Activated CD4-positive, alpha-beta memory T cell treated with anti-CD3 and anti-CD28 coated beads for 36 hours (primary cell): ENCODE measurements at regions of chr3 and their contacts with region 1.

Region 1: GRCh38 chr3:4834403-4834866 is 144.8 kb upstream of the BHLHE40 start:
- DNase-seq: peak; percentile 90
- H3K4me3 Mint-ChIP-seq: peak overlapping the region; percentile 49
- H3K27ac Mint-ChIP-seq: peak overlapping the region; percentile 84
- H3K4me1 Mint-ChIP-seq: peaks cover 86% of the 10 kb centered on the region
- H3K27me3 Mint-ChIP-seq: no peaks in the 10 kb centered on the region

Region 2: DNA sequence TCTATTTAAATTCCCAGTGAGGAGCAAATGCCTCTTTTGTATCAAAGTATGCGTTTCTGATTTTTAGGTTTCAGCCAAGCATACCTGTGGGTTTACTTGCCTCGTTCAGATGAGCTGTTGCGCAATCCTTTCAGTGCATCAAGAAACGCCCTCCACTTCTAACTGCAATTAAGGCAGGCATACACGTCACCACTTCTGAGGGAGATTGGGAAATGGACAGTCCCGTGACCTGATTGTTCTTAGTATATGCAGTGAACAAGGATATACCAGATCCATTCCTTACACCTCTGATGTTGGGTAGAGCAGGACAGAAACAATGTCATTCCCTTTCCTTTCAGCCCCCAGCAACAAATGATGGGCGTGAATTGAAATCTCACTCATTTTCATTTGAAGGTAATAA is 122.3 kb before region 1 on chr3:
- CTCF ChIA-PET with region 1: interaction called, 11 read pairs
- POLR2A ChIA-PET with region 1: no interaction called
- intact Hi-C with region 1: no loop called
- DNase-seq: no peak
- H3K4me3 Mint-ChIP-seq: no peak overlapping the region
- H3K27ac Mint-ChIP-seq: no peak overlapping the region
- H3K4me1 Mint-ChIP-seq: peaks cover 1% of the 10 kb centered on the region
- H3K27me3 Mint-ChIP-seq: no peaks in the 10 kb centered on the region

Region 3: DNA sequence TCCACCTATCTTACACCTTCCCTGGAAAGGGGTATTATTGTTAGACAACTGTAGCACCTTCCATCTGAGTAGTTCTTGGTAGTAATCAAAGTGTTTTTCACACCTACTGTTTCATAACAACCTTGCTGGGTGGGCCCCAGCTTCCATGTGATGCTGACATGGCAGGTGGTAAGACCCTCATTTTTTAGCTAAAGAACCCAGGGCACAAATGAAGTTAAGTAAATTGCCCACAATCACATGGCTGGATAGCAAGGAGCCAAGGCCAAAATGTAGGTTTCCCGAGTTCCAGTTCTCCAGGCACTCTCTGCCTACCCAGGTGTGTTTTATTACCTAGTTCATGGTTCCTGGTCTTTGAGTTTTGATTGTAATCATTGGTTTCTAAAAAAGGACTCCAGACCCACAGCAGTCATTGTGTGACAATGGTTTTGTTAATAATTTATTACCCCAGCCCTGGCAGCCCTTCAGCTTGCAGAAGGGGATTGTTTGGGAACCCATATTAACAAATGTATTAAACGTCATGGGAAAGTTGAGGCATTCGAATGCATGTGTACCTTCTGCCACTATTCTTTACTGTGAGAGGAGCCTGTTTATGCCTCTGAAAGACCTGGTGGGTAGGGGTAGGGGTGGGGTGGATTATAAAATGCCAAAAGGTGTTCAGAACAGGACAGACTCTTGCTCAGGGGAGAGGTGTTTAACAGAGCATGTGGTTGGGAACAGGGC is 77.4 kb before region 1 on chr3:
- CTCF ChIA-PET with region 1: no interaction called
- POLR2A ChIA-PET with region 1: no interaction called
- intact Hi-C with region 1: no loop called
- DNase-seq: no peak
- H3K4me3 Mint-ChIP-seq: no peak overlapping the region
- H3K27ac Mint-ChIP-seq: no peak overlapping the region
- H3K4me1 Mint-ChIP-seq: peaks cover 15% of the 10 kb centered on the region
- H3K27me3 Mint-ChIP-seq: no peaks in the 10 kb centered on the region

Region 4: GRCh38 chr3:4776980-4777581 is 57.4 kb before region 1 on chr3:
- CTCF ChIA-PET with region 1: no interaction called
- POLR2A ChIA-PET with region 1: interaction called, 3 read pairs
- intact Hi-C with region 1: loop called (anchors 2 kb)
- DNase-seq: peak; percentile 45
- H3K4me3 Mint-ChIP-seq: peak overlapping the region; percentile 47
- H3K27ac Mint-ChIP-seq: peak overlapping the region; percentile 91
- H3K4me1 Mint-ChIP-seq: peaks cover 37% of the 10 kb centered on the region
- H3K27me3 Mint-ChIP-seq: no peaks in the 10 kb centered on the region

Region 5: GRCh38 chr3:4850928-4851265 is 16.5 kb after region 1 on chr3:
- CTCF ChIA-PET with region 1: interaction called, 20 read pairs
- POLR2A ChIA-PET with region 1: interaction called, 57 read pairs
- intact Hi-C with region 1: loop called (anchors 1 kb)
- DNase-seq: peak; percentile 43
- H3K4me3 Mint-ChIP-seq: peak overlapping the region; percentile 53
- H3K27ac Mint-ChIP-seq: peak overlapping the region; percentile 88
- H3K4me1 Mint-ChIP-seq: peaks cover 88% of the 10 kb centered on the region
- H3K27me3 Mint-ChIP-seq: no peaks in the 10 kb centered on the region

Region 6: DNA sequence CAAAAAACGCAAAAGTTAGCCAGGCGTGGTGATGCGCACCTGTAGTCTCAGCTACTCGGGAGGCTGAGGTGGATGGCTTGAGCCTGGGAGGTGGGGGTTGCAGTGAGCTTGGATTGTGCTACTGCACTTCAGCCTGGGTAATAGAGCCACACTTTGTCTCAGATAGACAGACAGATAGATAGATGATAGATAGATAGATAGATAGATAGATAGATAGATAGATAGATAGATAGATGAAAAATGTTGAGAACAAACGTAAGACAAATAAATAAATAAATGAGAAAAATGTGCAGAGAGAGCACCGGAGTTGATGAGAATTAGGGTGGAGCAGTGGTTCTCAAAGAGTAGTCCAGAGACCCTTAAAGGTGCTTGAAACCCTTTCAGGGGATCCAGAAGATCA is 229.3 kb after region 1 on chr3:
- CTCF ChIA-PET with region 1: no interaction called
- POLR2A ChIA-PET with region 1: no interaction called
- intact Hi-C with region 1: no loop called
- DNase-seq: no peak
- H3K4me3 Mint-ChIP-seq: no peak overlapping the region
- H3K27ac Mint-ChIP-seq: no peak overlapping the region
- H3K4me1 Mint-ChIP-seq: no peaks in the 10 kb centered on the region
- H3K27me3 Mint-ChIP-seq: peaks cover 6% of the 10 kb centered on the region

Region 7: DNA sequence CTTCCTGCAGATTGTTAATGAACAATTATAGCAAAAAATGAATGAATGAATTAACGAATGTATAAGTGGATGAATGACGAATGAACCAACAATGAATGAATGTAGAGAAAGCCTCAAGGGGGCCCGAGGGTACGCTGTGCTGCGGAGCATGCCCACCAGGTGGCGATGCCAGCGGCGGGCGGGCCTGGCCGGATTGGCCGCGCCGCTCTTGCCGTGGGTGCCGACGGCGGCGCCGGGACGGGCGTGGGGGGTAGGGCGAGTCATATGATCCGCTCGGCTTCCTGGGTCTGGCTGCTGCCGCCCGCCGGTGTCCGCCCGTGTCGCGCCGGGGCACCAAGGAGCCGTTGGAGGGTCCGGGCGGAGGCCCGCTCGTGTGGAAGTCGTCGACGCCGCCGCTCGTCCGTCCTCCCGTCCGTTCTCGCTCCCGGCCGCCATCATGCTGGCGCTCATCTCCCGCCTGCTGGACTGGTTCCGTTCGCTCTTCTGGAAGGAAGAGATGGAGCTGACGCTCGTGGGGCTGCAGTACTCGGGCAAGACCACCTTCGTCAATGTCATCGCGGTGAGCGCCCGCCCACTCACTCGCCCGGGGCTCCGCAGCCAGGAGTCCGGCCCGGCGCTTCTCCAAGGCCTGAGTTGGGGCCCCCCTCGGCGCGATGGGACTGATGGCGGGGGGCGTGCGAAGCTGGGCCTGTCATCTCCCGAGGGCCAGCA is 287.8 kb after region 1 on chr3 and contains the start of gene ARL8B:
- CTCF ChIA-PET with region 1: no interaction called
- POLR2A ChIA-PET with region 1: interaction called, 3 read pairs
- intact Hi-C with region 1: loop called (anchors 2 kb)
- DNase-seq: peak; percentile 95
- H3K4me3 Mint-ChIP-seq: peak within 1 kb of the TSS; percentile 85
- H3K27ac Mint-ChIP-seq: peak within 1 kb of the TSS; percentile 92
- H3K4me1 Mint-ChIP-seq: peaks cover 41% of the 10 kb centered on the region
- H3K27me3 Mint-ChIP-seq: no peaks in the 10 kb centered on the region
- total RNA-seq, gene ARL8B: 55.4 to 58.5 TPM

Region 8: GRCh38 chr3:5888851-5889250 is 1054.4 kb after region 1 on chr3:
- CTCF ChIA-PET with region 1: no interaction called
- POLR2A ChIA-PET with region 1: no interaction called
- intact Hi-C with region 1: no loop called
- DNase-seq: no peak
- H3K4me3 Mint-ChIP-seq: no peak overlapping the region
- H3K27ac Mint-ChIP-seq: no peak overlapping the region
- H3K4me1 Mint-ChIP-seq: no peaks in the 10 kb centered on the region
- H3K27me3 Mint-ChIP-seq: no peaks in the 10 kb centered on the region